Activated CD4-positive, alpha-beta memory T cell treated with anti-CD3 and anti-CD28 coated beads for 36 hours (primary cell): ENCODE measurements at regions of chr6 and their contacts with region 1.

Region 1: DNA sequence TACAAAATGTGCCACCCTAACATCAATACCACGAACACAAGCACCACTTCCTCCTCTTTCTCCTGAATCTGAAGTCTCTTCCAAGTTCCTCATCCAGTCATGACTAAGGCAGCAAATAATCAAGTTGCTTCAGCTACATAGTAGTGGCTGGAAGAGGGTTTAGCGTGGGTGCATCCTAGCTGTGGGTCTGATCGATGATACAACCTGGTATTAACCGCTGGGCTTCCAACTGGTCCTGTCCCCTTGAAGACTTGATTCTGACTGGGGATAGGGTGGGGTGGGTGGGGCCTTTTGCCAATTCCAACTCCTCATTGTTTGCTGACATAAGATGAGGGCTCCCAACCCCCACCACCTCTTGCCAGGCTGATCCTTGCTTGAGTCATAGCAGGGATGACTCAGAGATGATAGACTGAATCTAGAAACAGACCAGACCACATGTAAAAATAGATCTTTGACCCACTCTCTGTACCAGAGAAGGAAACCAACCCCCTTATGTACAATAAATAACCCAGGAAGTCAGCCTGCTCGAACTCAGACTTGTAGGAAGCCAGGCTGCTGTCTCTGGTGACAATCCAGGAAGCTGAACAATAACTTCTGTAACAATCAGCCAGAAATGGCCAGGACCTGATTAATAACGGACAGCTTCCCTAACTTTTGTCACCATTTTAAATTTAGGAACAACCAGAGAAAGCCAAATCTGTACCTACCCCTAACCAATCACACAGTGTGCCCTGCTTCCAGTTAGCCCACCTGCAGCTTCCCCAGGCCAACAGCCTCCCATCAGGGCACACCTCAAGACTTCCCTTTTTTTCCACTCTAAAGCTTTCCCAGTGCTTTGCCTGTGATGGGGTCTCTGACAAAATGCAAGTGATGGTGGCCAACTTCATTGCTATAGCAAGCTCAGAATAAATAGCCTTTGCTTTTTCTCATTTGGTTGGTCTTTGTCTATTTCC is 68.9 kb upstream of the FAM184A start:
- DNase-seq: peak; percentile 75
- H3K4me3 Mint-ChIP-seq: no peak overlapping the region
- H3K27ac Mint-ChIP-seq: peak overlapping the region; percentile 26
- H3K4me1 Mint-ChIP-seq: peaks cover 35% of the 10 kb centered on the region
- H3K27me3 Mint-ChIP-seq: peaks cover 2% of the 10 kb centered on the region

Region 2: GRCh38 chr6:118934461-118935330 is 212.7 kb before region 1 on chr6 and contains the start of gene MCM9:
- CTCF ChIA-PET with region 1: no interaction called
- POLR2A ChIA-PET with region 1: no interaction called
- intact Hi-C with region 1: loop called (anchors 1 kb)
- DNase-seq: peak; percentile 94
- H3K4me3 Mint-ChIP-seq: peak within 1 kb of the TSS; percentile 81
- H3K27ac Mint-ChIP-seq: peak within 1 kb of the TSS; percentile 92
- H3K4me1 Mint-ChIP-seq: peaks cover 23% of the 10 kb centered on the region
- H3K27me3 Mint-ChIP-seq: no peaks in the 10 kb centered on the region
- total RNA-seq, gene MCM9: 14.4 to 14.7 TPM

Region 3: GRCh38 chr6:119162134-119162775 is 14.9 kb after region 1 on chr6:
- CTCF ChIA-PET with region 1: interaction called, 3 read pairs
- POLR2A ChIA-PET with region 1: no interaction called
- intact Hi-C with region 1: loop called (anchors 2 kb)
- DNase-seq: no peak
- H3K4me3 Mint-ChIP-seq: no peak overlapping the region
- H3K27ac Mint-ChIP-seq: no peak overlapping the region
- H3K4me1 Mint-ChIP-seq: no peaks in the 10 kb centered on the region
- H3K27me3 Mint-ChIP-seq: peaks cover 25% of the 10 kb centered on the region

Region 4: GRCh38 chr6:119226089-119226488 is 78.7 kb after region 1 on chr6:
- CTCF ChIA-PET with region 1: no interaction called
- POLR2A ChIA-PET with region 1: no interaction called
- intact Hi-C with region 1: no loop called
- DNase-seq: no peak
- H3K4me3 Mint-ChIP-seq: no peak overlapping the region
- H3K27ac Mint-ChIP-seq: no peak overlapping the region
- H3K4me1 Mint-ChIP-seq: no peaks in the 10 kb centered on the region
- H3K27me3 Mint-ChIP-seq: no peaks in the 10 kb centered on the region

Region 5: GRCh38 chr6:119463081-119463626 is 315.8 kb after region 1 on chr6:
- CTCF ChIA-PET with region 1: no interaction called
- POLR2A ChIA-PET with region 1: no interaction called
- intact Hi-C with region 1: loop called (anchors 1 kb)
- DNase-seq: peak; percentile 34
- H3K4me3 Mint-ChIP-seq: no peak overlapping the region
- H3K27ac Mint-ChIP-seq: peak overlapping the region; percentile 11
- H3K4me1 Mint-ChIP-seq: peaks cover 27% of the 10 kb centered on the region
- H3K27me3 Mint-ChIP-seq: no peaks in the 10 kb centered on the region

Region 6: DNA sequence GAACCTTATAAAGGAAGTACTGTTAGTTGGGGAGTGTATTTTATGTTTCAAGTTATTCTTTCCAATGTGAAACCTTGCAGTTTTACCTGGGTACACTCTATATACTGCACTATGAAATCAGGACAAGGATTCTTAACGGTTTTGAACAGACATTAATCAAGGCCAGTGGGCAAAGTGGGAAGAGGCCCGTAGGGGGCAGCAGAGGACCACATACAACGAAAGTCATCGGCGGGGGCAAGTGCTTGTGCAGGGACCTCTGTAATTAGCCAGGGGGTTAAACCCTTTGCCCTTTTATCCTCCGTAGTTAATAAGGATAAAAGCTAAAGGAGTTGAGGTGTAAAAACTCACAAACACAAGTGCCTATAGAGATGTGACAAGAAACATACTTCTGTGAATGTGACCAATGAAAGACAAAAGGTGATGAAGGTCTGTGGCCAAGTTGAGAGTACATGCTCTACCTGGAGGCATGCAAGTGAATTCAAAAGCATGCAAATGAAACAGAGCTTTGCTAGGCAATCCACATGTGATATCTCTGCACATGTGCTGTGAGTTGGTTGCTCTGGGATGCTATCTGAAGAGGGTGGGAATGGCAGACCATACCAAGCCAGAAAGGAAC is 594.9 kb after region 1 on chr6:
- CTCF ChIA-PET with region 1: interaction called, 3 read pairs
- POLR2A ChIA-PET with region 1: no interaction called
- intact Hi-C with region 1: loop called (anchors 5 kb)
- DNase-seq: peak; percentile 66
- H3K4me3 Mint-ChIP-seq: no peak overlapping the region
- H3K27ac Mint-ChIP-seq: no peak overlapping the region
- H3K4me1 Mint-ChIP-seq: no peaks in the 10 kb centered on the region
- H3K27me3 Mint-ChIP-seq: peaks cover 2% of the 10 kb centered on the region

Region 7: GRCh38 chr6:120826253-120826652 is 1678.9 kb after region 1 on chr6:
- CTCF ChIA-PET with region 1: no interaction called
- POLR2A ChIA-PET with region 1: no interaction called
- intact Hi-C with region 1: loop called (anchors 10 kb)
- DNase-seq: peak; percentile 13
- H3K4me3 Mint-ChIP-seq: no peak overlapping the region
- H3K27ac Mint-ChIP-seq: no peak overlapping the region
- H3K4me1 Mint-ChIP-seq: no peaks in the 10 kb centered on the region
- H3K27me3 Mint-ChIP-seq: no peaks in the 10 kb centered on the region